Activated CD4-positive, alpha-beta T cell treated with anti-CD3 and anti-CD28 coated beads for 36 hours (primary cell): ENCODE measurements at regions of chr7 and their contacts with region 1.

Region 1: DNA sequence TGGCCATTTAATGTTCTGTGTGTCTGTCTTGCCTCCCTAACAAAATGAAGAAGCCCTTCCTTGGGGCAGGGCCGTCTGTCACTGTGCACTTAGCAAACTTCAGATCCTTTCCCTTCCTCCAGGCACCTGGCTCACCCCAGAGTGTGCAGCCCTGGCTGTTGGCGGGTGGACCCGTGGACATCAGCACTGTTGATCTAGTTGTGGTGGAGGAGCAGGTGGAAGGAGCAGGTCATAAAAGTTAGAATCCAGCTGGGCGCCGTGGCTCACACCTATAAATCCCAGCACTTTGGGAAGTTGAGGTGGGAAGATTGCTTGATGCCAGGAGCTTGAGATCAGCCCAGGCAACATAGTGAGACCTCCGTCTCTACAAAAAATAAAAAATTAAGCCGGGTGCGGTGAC is 12.7 kb downstream of the RAB19 start:
- DNase-seq: no peak
- ATAC-seq: no peak
- H3K4me3 Mint-ChIP-seq: no peak overlapping the region
- H3K27ac Mint-ChIP-seq: no peak overlapping the region
- H3K4me1 Mint-ChIP-seq: peaks cover 2% of the 10 kb centered on the region
- H3K27me3 Mint-ChIP-seq: no peaks in the 10 kb centered on the region

Region 2: DNA sequence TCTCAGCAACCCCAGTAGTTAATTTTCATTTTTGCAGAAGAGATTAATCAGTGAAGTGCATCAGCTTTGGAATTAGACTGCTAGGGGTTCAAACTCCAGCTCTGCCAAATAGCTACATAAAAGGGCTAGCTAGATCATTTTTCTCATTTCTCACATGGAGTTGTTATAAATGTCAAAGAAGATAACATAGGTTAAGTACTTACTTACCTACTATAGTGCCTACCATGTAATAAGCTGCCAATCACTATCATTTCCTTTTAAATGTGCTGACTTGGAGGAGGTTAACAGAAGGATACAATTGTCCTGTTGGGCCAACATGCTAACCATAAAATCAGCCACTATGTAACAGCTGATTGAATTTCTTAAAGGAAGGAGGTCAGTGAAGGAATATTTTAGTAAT is 280.5 kb before region 1 on chr7:
- CTCF ChIA-PET with region 1: no interaction called
- POLR2A ChIA-PET with region 1: interaction called, 11 read pairs
- intact Hi-C with region 1: no loop called
- DNase-seq: no peak
- ATAC-seq: no peak
- H3K4me3 Mint-ChIP-seq: no peak overlapping the region
- H3K27ac Mint-ChIP-seq: no peak overlapping the region
- H3K4me1 Mint-ChIP-seq: peaks cover 28% of the 10 kb centered on the region
- H3K27me3 Mint-ChIP-seq: no peaks in the 10 kb centered on the region